ENCODE measurements at regions of chr2 and their contacts with region 1.

Region 1: DNA sequence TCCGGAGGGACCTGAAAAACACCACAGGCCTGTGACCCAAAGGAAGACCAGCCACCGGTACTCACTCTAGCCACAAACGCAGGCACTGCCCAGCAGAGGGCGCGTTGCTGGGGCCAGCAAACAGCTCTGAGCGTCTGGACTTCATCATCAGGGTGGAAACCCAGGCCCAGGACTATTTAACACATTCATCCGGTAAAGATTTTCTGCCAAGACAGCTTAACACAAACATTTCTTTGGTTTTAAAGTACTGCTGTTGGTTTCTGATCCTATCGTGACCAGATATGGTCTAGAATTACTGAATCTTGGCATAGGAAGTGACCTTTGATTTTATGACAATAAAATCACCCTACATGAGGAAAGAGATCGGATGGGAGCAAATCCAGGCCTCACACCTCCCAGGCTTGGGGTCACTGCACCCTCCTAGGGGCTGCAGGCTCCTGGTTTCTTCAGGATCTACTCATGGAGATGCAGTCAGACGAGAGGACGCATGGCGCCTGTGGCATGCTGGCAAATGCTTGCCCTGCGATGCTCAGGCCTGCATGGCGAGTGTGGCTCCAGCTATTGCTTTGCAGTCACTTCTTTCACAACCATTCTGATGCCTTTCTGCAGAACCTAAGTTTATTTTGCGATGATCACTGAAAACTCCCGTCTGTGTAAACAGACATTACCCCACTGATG is 130.4 kb downstream of the COL4A4 start:
- DNase-seq: peak; percentile 83
- ATAC-seq: peak; percentile 100
- H3K4me3 Mint-ChIP-seq: no peak overlapping the region
- H3K27ac Mint-ChIP-seq: no peak overlapping the region
- H3K4me1 Mint-ChIP-seq: peaks cover 4% of the 10 kb centered on the region; the same call in 1 of the 2 replicates
- H3K27me3 Mint-ChIP-seq: no peaks in the 10 kb centered on the region
- CTCF ChIP-seq: peak; percentile 62

Region 2: GRCh38 chr2:225660262-225661131 is 1373.1 kb before region 1 on chr2:
- CTCF ChIA-PET with region 1: interaction called, 11 read pairs
- POLR2A ChIA-PET with region 1: no interaction called
- DNase-seq: peak; percentile 81
- ATAC-seq: peak; percentile 76
- H3K4me3 Mint-ChIP-seq: no peak overlapping the region
- H3K27ac Mint-ChIP-seq: no peak overlapping the region
- H3K4me1 Mint-ChIP-seq: peaks cover 18% of the 10 kb centered on the region
- H3K27me3 Mint-ChIP-seq: no peaks in the 10 kb centered on the region
- CTCF ChIP-seq: peak; percentile 78

Region 3: GRCh38 chr2:226891780-226892590 is 141.6 kb before region 1 on chr2:
- CTCF ChIA-PET with region 1: no interaction called
- POLR2A ChIA-PET with region 1: no interaction called
- DNase-seq: no peak
- ATAC-seq: peak; percentile 72
- H3K4me3 Mint-ChIP-seq: no peak overlapping the region
- H3K27ac Mint-ChIP-seq: no peak overlapping the region
- H3K4me1 Mint-ChIP-seq: no peaks in the 10 kb centered on the region
- H3K27me3 Mint-ChIP-seq: no peaks in the 10 kb centered on the region
- CTCF ChIP-seq: no peak

Region 4: GRCh38 chr2:227052879-227053278 is 19.3 kb after region 1 on chr2:
- CTCF ChIA-PET with region 1: interaction called, 10 read pairs
- POLR2A ChIA-PET with region 1: no interaction called
- DNase-seq: no peak
- ATAC-seq: no peak
- H3K4me3 Mint-ChIP-seq: no peak overlapping the region
- H3K27ac Mint-ChIP-seq: no peak overlapping the region
- H3K4me1 Mint-ChIP-seq: no peaks in the 10 kb centered on the region
- H3K27me3 Mint-ChIP-seq: no peaks in the 10 kb centered on the region
- CTCF ChIP-seq: no peak

Region 5: GRCh38 chr2:227106845-227107759 is 73.5 kb after region 1 on chr2:
- CTCF ChIA-PET with region 1: interaction called, 11 read pairs
- POLR2A ChIA-PET with region 1: no interaction called
- DNase-seq: peak; percentile 69
- ATAC-seq: peak; percentile 92
- H3K4me3 Mint-ChIP-seq: no peak overlapping the region
- H3K27ac Mint-ChIP-seq: peak overlapping the region; percentile 78
- H3K4me1 Mint-ChIP-seq: peaks cover 6% of the 10 kb centered on the region
- H3K27me3 Mint-ChIP-seq: no peaks in the 10 kb centered on the region
- CTCF ChIP-seq: peak; percentile 57

Measured in WTC11 (cell line).